PC-9 (cell line): ENCODE measurements at regions of chr5 and their contacts with region 1.

Region 1: DNA sequence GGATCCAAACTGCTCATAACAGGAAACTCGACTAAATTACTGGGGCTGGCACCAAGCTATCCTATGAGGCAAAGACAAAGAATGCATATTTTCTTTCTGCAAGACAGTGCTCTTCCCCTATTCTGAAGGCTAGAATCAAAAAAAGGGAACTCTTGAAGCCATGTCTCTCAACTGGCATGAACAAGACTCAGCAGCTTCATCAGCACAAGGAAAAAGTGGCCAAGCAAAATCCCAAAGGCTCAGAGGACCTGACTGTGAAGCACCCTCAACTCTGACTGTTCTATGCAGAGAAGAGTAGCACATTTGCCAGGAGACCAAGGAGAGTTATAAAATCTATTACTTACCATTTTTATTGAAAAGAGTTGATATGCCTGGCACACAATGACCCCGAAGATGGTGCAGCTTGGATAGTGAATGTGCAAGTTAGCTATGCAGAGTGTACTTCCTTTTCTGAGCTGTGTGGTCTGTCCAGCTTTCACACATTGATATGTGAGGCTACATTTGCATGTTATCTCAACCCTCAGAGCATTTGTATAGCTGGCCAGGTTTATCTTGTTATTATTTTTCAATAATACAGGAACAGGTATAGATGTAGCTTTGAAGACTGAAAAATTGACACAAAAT is 51.0 kb upstream of the FYB1 start:
- DNase-seq: no peak
- H3K4me3 ChIP-seq: no peak overlapping the region
- H3K27ac ChIP-seq: no peak overlapping the region
- H3K4me1 ChIP-seq: 0 out of 2 replicates have a peak, but pooled peaks cover 5% of the 10 kb centered on the region
- H3K27me3 ChIP-seq: no peaks in the 10 kb centered on the region
- CTCF ChIP-seq: no peak

Region 2: GRCh38 chr5:39353717-39354399 is 83.5 kb after region 1 on chr5:
- CTCF ChIA-PET with region 1: no interaction called
- POLR2A ChIA-PET with region 1: interaction called, 11 read pairs
- intact Hi-C with region 1: no loop called
- DNase-seq: no peak
- H3K4me3 ChIP-seq: no peak overlapping the region
- H3K27ac ChIP-seq: no peak overlapping the region
- H3K4me1 ChIP-seq: no peaks in the 10 kb centered on the region
- H3K27me3 ChIP-seq: no peaks in the 10 kb centered on the region
- CTCF ChIP-seq: no peak

Region 3: GRCh38 chr5:39680213-39680612 is 409.9 kb after region 1 on chr5:
- CTCF ChIA-PET with region 1: no interaction called
- POLR2A ChIA-PET with region 1: no interaction called
- intact Hi-C with region 1: no loop called
- DNase-seq: no peak
- H3K4me3 ChIP-seq: no peak overlapping the region
- H3K27ac ChIP-seq: no peak overlapping the region
- H3K4me1 ChIP-seq: peaks cover 19% of the 10 kb centered on the region
- H3K27me3 ChIP-seq: no peaks in the 10 kb centered on the region
- CTCF ChIP-seq: no peak